GM13976 (cell line): ENCODE measurements at regions of chr2 and their contacts with region 1.

Region 1: GRCh38 chr2:102436323-102436722 is 13.4 kb downstream of the IL18RAP start:
- DNase-seq: no peak
- CTCF ChIP-seq: no peak

Region 2: GRCh38 chr2:102366406-102367112 is 69.8 kb before region 1 on chr2:
- in situ Hi-C with region 1: loop called (anchors 10 kb)
- DNase-seq: peak; percentile 37
- CTCF ChIP-seq: no peak